ENCODE measurements at regions of chr9 and their contacts with region 1.

Region 1: GRCh38 chr9:76810377-76810957 is 46.2 kb downstream of the PCA3 start:
- DNase-seq: peak in 2 of 9 experiments; percentile 6 to 20
- ATAC-seq: no peak
- H3K4me3 ChIP-seq: no peak overlapping the region
- H3K4me3 Mint-ChIP-seq: no peak overlapping the region
- H3K27ac ChIP-seq: no peak overlapping the region
- H3K27ac Mint-ChIP-seq: no peak overlapping the region
- H3K4me1 ChIP-seq: no peaks in the 10 kb centered on the region
- H3K4me1 Mint-ChIP-seq: no peaks in the 10 kb centered on the region
- H3K27me3 ChIP-seq: peaks cover 0 to 5% of the 10 kb centered on the region in 2 experiments
- H3K27me3 Mint-ChIP-seq: peaks cover 23% of the 10 kb centered on the region
- CTCF ChIP-seq: peak; percentile 15

Region 2: DNA sequence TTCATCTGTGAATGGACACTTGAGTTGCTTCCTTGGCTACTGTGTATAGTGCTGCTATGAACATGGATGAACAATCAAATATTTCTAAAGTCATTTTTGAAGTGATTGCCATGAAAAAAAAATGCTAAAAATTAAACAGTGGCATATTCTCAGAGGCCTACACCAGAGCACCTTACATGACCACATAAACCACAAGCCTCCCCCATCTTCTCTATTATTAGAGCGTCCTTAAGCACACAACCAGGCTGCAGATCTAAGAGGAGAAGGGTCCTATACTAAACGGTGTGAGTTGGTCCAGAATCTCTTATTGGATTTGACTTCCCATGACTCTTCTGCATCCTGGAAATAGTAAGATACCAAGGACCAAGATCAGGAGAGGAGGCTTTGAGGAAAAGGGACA is 11.9 kb before region 1 on chr9:
- CTCF ChIA-PET with region 1: no interaction called
- POLR2A ChIA-PET with region 1: no interaction called
- intact Hi-C with region 1: no loop called
- DNase-seq: no peak
- ATAC-seq: no peak
- H3K4me3 ChIP-seq: no peak overlapping the region
- H3K4me3 Mint-ChIP-seq: no peak overlapping the region
- H3K27ac ChIP-seq: no peak overlapping the region
- H3K27ac Mint-ChIP-seq: no peak overlapping the region
- H3K4me1 ChIP-seq: no peaks in the 10 kb centered on the region
- H3K4me1 Mint-ChIP-seq: no peaks in the 10 kb centered on the region
- H3K27me3 ChIP-seq: no peaks in the 10 kb centered on the region
- H3K27me3 Mint-ChIP-seq: no peaks in the 10 kb centered on the region
- CTCF ChIP-seq: no peak

Region 3: DNA sequence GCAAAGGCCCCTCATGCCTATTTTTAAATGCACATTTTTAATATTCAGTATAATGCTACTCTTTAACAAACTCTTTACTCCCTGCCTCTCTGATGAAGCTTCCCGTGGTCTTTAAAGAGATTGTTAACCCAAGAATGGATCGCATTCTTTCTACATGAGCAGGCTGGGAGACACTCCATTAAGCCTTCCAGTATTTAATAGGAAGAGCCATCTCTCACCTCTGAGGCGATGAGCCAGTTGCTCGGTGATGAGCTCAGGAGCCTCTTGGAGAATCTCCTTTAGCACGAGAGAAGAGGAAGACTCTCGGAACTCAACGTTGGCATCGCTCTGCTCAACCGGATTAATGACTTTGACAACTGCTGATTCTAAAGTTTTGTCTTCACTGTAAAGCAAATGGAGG is 35.8 kb after region 1 on chr9:
- CTCF ChIA-PET with region 1: no interaction called
- POLR2A ChIA-PET with region 1: no interaction called
- intact Hi-C with region 1: no loop called
- DNase-seq: no peak
- ATAC-seq: no peak
- H3K4me3 ChIP-seq: no peak overlapping the region
- H3K4me3 Mint-ChIP-seq: no peak overlapping the region
- H3K27ac ChIP-seq: no peak overlapping the region
- H3K27ac Mint-ChIP-seq: no peak overlapping the region
- H3K4me1 ChIP-seq: no peaks in the 10 kb centered on the region
- H3K4me1 Mint-ChIP-seq: no peaks in the 10 kb centered on the region
- H3K27me3 ChIP-seq: no peaks in the 10 kb centered on the region
- H3K27me3 Mint-ChIP-seq: peaks cover 6% of the 10 kb centered on the region
- CTCF ChIP-seq: no peak

Region 4: GRCh38 chr9:76859860-76860259 is 49.4 kb after region 1 on chr9:
- CTCF ChIA-PET with region 1: no interaction called
- POLR2A ChIA-PET with region 1: no interaction called
- intact Hi-C with region 1: loop called in 1 of 2 experiments (anchors 5 kb)
- DNase-seq: no peak
- ATAC-seq: no peak
- H3K4me3 ChIP-seq: no peak overlapping the region
- H3K4me3 Mint-ChIP-seq: no peak overlapping the region
- H3K27ac ChIP-seq: no peak overlapping the region
- H3K27ac Mint-ChIP-seq: no peak overlapping the region
- H3K4me1 ChIP-seq: no peaks in the 10 kb centered on the region
- H3K4me1 Mint-ChIP-seq: no peaks in the 10 kb centered on the region
- H3K27me3 ChIP-seq: no peaks in the 10 kb centered on the region
- H3K27me3 Mint-ChIP-seq: no peaks in the 10 kb centered on the region
- CTCF ChIP-seq: no peak

Region 5: DNA sequence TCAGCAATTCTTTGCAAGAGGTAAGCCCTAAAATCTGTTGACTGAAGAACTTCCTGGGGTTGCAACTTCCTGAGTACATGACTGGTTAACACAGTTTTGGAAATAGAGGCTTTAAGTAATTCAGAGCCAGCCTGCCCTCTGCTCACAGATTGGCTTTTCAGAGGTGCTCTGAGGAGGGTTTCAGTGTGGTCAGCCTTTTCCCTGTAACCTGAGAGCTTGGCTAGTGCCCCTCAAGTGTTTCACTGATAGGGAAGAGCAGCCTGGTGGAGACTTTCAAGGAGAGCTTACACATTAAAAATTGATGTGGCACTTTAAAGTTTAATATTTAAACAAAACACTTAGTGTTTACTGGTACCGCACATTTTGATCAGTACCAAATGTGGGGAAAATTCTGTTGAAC is 152.3 kb after region 1 on chr9:
- CTCF ChIA-PET with region 1: no interaction called
- POLR2A ChIA-PET with region 1: no interaction called
- intact Hi-C with region 1: no loop called
- DNase-seq: no peak
- ATAC-seq: no peak
- H3K4me3 ChIP-seq: no peak overlapping the region
- H3K4me3 Mint-ChIP-seq: no peak overlapping the region
- H3K27ac ChIP-seq: no peak overlapping the region
- H3K27ac Mint-ChIP-seq: no peak overlapping the region
- H3K4me1 ChIP-seq: no peaks in the 10 kb centered on the region
- H3K4me1 Mint-ChIP-seq: no peaks in the 10 kb centered on the region
- H3K27me3 ChIP-seq: no peaks in the 10 kb centered on the region
- H3K27me3 Mint-ChIP-seq: peaks cover 9% of the 10 kb centered on the region
- CTCF ChIP-seq: no peak

Region 6: DNA sequence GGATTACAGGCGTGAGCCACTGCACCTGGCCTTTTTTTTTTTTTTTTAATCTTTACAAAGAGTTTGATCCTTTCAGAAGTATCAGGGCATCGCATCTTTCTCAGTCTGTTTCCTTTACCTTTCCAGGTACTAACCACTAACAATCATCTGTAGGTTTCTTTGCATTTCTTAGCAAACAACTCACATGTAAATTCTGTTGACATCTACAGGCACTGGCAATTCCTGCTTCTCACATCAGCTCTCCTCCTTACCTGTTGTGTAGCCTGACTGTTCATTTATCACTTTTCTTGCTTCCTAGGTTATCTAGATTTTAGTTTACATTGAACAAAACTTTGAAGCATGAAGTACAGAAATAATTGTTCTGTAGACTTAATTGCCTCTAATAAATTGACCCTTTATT is 339.4 kb after region 1 on chr9:
- CTCF ChIA-PET with region 1: no interaction called
- POLR2A ChIA-PET with region 1: no interaction called
- intact Hi-C with region 1: loop called in 1 of 2 experiments (anchors 2 kb)
- DNase-seq: no peak
- ATAC-seq: no peak
- H3K4me3 ChIP-seq: no peak overlapping the region
- H3K4me3 Mint-ChIP-seq: no peak overlapping the region
- H3K27ac ChIP-seq: no peak overlapping the region
- H3K27ac Mint-ChIP-seq: no peak overlapping the region
- H3K4me1 ChIP-seq: no peaks in the 10 kb centered on the region
- H3K4me1 Mint-ChIP-seq: no peaks in the 10 kb centered on the region
- H3K27me3 ChIP-seq: peaks cover 0 to 2% of the 10 kb centered on the region in 2 experiments
- H3K27me3 Mint-ChIP-seq: peaks cover 20% of the 10 kb centered on the region
- CTCF ChIP-seq: no peak

Measured in CD8-positive, alpha-beta T cell (primary cell).